A673 (cell line): ENCODE measurements at regions of chr6 and their contacts with region 1.

Region 1: GRCh38 chr6:107674995-107675738 is 148.9 kb downstream of the SCML4 start:
- DNase-seq: peak; percentile 86
- H3K4me3 ChIP-seq: no peak overlapping the region
- H3K27ac ChIP-seq: no peak overlapping the region
- H3K4me1 ChIP-seq: no peaks in the 10 kb centered on the region
- H3K27me3 ChIP-seq: no peaks in the 10 kb centered on the region
- CTCF ChIP-seq: peak; percentile 88; the same call in 1 of the 2 replicates

Region 2: DNA sequence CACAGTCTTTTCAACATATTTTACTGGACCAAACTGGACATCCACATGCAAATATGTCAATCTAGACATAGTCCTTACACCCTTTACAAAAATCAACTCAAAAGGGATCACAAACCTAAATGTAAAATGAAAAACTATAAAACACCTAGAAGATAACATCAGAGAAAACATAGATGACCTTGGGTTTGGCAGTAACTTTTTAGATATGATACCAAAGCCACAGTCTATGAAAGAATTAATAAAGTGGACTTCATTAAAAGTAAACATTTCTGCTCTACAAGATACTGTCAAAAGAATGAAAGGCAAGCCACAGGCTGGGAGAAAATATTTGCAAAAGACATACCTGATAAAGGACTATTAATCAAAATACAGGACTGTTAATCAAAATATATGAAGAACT is 581.5 kb before region 1 on chr6:
- CTCF ChIA-PET with region 1: no interaction called
- POLR2A ChIA-PET with region 1: no interaction called
- intact Hi-C with region 1: no loop called
- DNase-seq: no peak
- H3K4me3 ChIP-seq: no peak overlapping the region
- H3K27ac ChIP-seq: no peak overlapping the region
- H3K4me1 ChIP-seq: no peaks in the 10 kb centered on the region
- H3K27me3 ChIP-seq: no peaks in the 10 kb centered on the region
- CTCF ChIP-seq: no peak

Region 3: DNA sequence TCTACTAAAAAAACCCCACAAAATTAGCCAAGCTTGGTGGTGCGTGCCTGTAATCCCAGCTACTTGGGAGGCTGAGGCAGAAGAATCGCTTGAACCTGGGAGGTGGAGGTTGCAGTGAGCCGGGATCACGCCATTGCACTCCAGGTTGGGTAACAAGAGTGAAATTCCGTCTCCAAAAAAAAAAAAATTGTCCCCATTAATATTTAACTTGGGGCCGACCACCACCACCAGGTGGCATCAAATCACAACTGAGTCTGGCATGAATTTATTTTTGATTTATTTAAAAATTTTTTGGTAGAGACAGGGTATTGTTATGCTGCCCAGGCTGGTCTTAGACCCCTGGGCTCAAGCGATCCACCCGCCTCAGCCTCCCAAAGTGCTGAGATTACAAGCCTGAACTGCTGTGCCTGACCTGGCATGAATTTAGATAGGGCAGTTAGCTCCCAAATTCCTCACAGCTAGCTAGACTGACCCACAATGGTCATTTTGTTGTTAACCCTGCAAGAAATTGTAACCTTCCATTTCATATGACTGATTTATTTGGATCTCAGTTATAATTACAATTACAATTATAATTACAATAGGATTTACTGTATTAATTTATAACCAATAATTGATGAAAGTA is 542.7 kb before region 1 on chr6:
- CTCF ChIA-PET with region 1: no interaction called
- POLR2A ChIA-PET with region 1: no interaction called
- intact Hi-C with region 1: loop called (anchors 10 kb)
- DNase-seq: peak; percentile 43
- H3K4me3 ChIP-seq: no peak overlapping the region
- H3K27ac ChIP-seq: no peak overlapping the region
- H3K4me1 ChIP-seq: no peaks in the 10 kb centered on the region
- H3K27me3 ChIP-seq: no peaks in the 10 kb centered on the region
- CTCF ChIP-seq: peak; percentile 59

Region 4: GRCh38 chr6:107292715-107293271 is 382.4 kb before region 1 on chr6:
- CTCF ChIA-PET with region 1: no interaction called
- POLR2A ChIA-PET with region 1: no interaction called
- intact Hi-C with region 1: no loop called
- DNase-seq: no peak
- H3K4me3 ChIP-seq: no peak overlapping the region
- H3K27ac ChIP-seq: no peak overlapping the region
- H3K4me1 ChIP-seq: no peaks in the 10 kb centered on the region
- H3K27me3 ChIP-seq: no peaks in the 10 kb centered on the region
- CTCF ChIP-seq: no peak

Region 5: DNA sequence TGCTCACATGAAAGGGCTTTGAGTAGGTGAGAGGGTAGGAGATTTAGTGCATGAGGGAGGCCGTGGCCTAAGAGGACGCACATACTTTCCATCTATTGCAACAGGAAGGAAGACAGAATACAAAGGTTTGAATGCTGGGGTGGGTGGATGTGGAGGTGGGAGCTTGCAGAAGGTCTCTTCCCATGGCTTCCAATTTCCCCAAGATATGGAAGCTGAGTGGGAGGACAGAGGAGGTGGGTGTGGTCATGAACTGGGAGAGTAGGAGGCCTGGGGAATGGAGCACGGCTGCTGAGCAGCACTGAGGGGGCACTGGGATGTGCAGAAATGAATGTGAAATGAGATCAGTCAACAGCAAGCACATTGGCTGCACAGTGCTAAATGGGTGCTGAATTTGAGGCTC is 78.6 kb after region 1 on chr6:
- CTCF ChIA-PET with region 1: no interaction called
- POLR2A ChIA-PET with region 1: no interaction called
- intact Hi-C with region 1: no loop called
- DNase-seq: no peak
- H3K4me3 ChIP-seq: no peak overlapping the region
- H3K27ac ChIP-seq: no peak overlapping the region
- H3K4me1 ChIP-seq: no peaks in the 10 kb centered on the region
- H3K27me3 ChIP-seq: peaks cover 8% of the 10 kb centered on the region
- CTCF ChIP-seq: no peak

Region 6: GRCh38 chr6:107847844-107848802 is 173.0 kb after region 1 on chr6:
- CTCF ChIA-PET with region 1: no interaction called
- POLR2A ChIA-PET with region 1: no interaction called
- intact Hi-C with region 1: loop called (anchors 1 kb)
- DNase-seq: peak; percentile 89
- H3K4me3 ChIP-seq: peak overlapping the region; percentile 40
- H3K27ac ChIP-seq: no peak overlapping the region
- H3K4me1 ChIP-seq: no peaks in the 10 kb centered on the region
- H3K27me3 ChIP-seq: no peaks in the 10 kb centered on the region
- CTCF ChIP-seq: peak; percentile 97